ENCODE measurements at regions of chr18 and their contacts with region 1.

Region 1: GRCh38 chr18:623761-624620 is 27.2 kb downstream of the CLUL1 start:
- DNase-seq: peak; percentile 78
- ATAC-seq: peak; percentile 85
- H3K4me3 ChIP-seq: no peak overlapping the region
- H3K27ac ChIP-seq: no peak overlapping the region
- H3K4me1 ChIP-seq: no peaks in the 10 kb centered on the region; the same call in 1 of the 2 replicates
- H3K27me3 ChIP-seq: peaks cover 8% of the 10 kb centered on the region
- CTCF ChIP-seq: peak; percentile 73
- POLR2A ChIP-seq: no peak
- RAD21 ChIP-seq: peak; percentile 67

Region 2: GRCh38 chr18:148841-149240 is 475.1 kb before region 1 on chr18:
- CTCF ChIA-PET with region 1: no interaction called
- POLR2A ChIA-PET with region 1: no interaction called
- dilution Hi-C with region 1: no loop called
- in situ Hi-C with region 1: no loop called
- intact Hi-C with region 1: no loop called
- DNase-seq: no peak
- ATAC-seq: no peak
- H3K4me3 ChIP-seq: no peak overlapping the region
- H3K27ac ChIP-seq: no peak overlapping the region
- H3K4me1 ChIP-seq: no peaks in the 10 kb centered on the region
- H3K27me3 ChIP-seq: peaks cover 4% of the 10 kb centered on the region
- CTCF ChIP-seq: no peak
- POLR2A ChIP-seq: no peak
- RAD21 ChIP-seq: no peak

Region 3: GRCh38 chr18:286515-287310 is 337.3 kb before region 1 on chr18:
- CTCF ChIA-PET with region 1: interaction called, 4 read pairs
- POLR2A ChIA-PET with region 1: no interaction called
- dilution Hi-C with region 1: no loop called
- in situ Hi-C with region 1: loop called (anchors 5 kb)
- intact Hi-C with region 1: no loop called
- DNase-seq: peak; percentile 42
- ATAC-seq: peak; percentile 70
- H3K4me3 ChIP-seq: no peak overlapping the region
- H3K27ac ChIP-seq: no peak overlapping the region
- H3K4me1 ChIP-seq: no peaks in the 10 kb centered on the region
- H3K27me3 ChIP-seq: peaks cover 8% of the 10 kb centered on the region
- CTCF ChIP-seq: peak; percentile 85
- POLR2A ChIP-seq: peak; percentile 33; the same call in 1 of the 2 replicates
- RAD21 ChIP-seq: peak; percentile 91

Region 4: DNA sequence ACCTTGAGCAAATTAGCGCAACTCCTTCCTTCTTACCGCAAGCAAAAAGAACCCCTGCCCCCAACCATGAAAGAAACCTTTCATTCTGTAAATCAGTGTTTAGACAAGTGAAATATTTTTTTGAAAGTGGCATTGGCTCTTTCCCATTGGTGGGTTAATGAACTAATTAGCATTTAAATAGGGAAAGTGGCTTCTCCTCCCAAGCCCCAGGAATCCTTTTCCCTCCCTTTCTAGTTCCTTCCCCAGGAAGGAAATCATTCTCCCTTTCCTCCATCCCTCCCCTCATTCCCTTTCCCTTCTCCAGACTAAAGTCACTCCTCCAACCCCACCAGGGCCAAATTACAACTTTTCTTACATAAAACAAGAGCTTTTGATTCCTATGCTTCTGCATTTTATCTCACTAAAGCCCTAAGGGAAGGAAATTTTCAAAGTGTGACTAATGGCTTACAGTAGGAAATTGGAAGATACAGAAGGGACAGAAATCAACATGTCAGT is 10.6 kb after region 1 on chr18:
- CTCF ChIA-PET with region 1: interaction called, 4 read pairs
- POLR2A ChIA-PET with region 1: interaction called, 17 read pairs
- dilution Hi-C with region 1: no loop called
- in situ Hi-C with region 1: no loop called
- intact Hi-C with region 1: no loop called
- DNase-seq: no peak
- ATAC-seq: 0 out of 2 replicates have a peak, but pooled peaks have one; percentile 17
- H3K4me3 ChIP-seq: no peak overlapping the region
- H3K27ac ChIP-seq: no peak overlapping the region
- H3K4me1 ChIP-seq: no peaks in the 10 kb centered on the region
- H3K27me3 ChIP-seq: peaks cover 3% of the 10 kb centered on the region; the same call in 1 of the 2 replicates
- CTCF ChIP-seq: no peak
- POLR2A ChIP-seq: no peak
- RAD21 ChIP-seq: no peak

Region 5: DNA sequence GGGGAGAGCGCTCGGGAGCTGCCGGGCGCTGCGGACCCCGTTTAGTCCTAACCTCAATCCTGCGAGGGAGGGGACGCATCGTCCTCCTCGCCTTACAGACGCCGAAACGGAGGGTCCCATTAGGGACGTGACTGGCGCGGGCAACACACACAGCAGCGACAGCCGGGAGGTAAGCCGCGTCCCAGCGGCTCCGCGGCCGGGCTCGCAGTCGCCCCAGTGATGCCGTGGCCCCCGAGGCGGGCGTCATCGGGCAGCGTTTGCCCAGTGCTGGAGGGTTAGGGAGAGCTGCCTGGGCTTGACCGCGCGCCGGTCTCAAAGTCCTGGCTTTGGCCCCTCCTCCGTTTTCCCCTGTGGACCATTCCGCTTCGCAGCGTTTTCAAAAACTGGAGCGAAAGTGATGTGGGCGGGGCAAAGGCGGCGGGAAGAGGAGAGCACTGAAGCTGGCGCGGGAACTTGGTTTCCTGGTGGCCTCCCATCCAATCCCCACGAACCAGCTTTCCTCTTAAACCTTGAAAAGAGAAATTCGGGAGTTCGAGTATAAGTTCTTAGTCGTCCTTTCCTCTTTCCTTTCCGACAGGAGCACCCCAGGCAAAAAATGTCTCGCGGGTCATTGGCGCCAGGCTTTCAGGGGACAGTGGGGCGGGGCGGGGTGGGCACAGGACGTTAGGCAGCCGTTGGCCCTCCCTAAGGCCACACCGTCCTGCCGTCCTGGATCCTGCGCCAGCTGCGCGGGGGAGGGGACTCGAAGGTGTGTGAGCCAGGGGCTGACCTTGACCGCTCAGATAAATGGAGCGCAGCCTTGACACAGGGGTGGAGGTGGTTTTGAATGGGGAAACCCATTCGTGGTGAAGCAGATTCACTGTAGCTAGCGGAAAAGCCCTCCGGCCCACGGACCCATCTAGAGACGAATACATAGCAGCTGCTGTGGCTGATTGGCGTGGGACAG is 34.3 kb after region 1 on chr18:
- CTCF ChIA-PET with region 1: interaction called, 4 read pairs
- POLR2A ChIA-PET with region 1: no interaction called
- dilution Hi-C with region 1: no loop called
- in situ Hi-C with region 1: no loop called
- intact Hi-C with region 1: loop called (anchors 2 kb)
- DNase-seq: peak; percentile 84
- ATAC-seq: peak; percentile 94
- H3K4me3 ChIP-seq: peak overlapping the region; percentile 90
- H3K27ac ChIP-seq: peak overlapping the region; percentile 98
- H3K4me1 ChIP-seq: 0 out of 2 replicates have a peak, but pooled peaks cover 2% of the 10 kb centered on the region
- H3K27me3 ChIP-seq: no peaks in the 10 kb centered on the region
- CTCF ChIP-seq: no peak
- POLR2A ChIP-seq: no peak
- RAD21 ChIP-seq: no peak

Region 6: GRCh38 chr18:741931-742512 is 118.0 kb after region 1 on chr18:
- CTCF ChIA-PET with region 1: no interaction called
- POLR2A ChIA-PET with region 1: no interaction called
- dilution Hi-C with region 1: no loop called
- in situ Hi-C with region 1: no loop called
- intact Hi-C with region 1: loop called (anchors 5 kb)
- DNase-seq: peak; percentile 63
- ATAC-seq: peak; percentile 83
- H3K4me3 ChIP-seq: no peak overlapping the region
- H3K27ac ChIP-seq: no peak overlapping the region
- H3K4me1 ChIP-seq: no peaks in the 10 kb centered on the region
- H3K27me3 ChIP-seq: no peaks in the 10 kb centered on the region
- CTCF ChIP-seq: peak; percentile 77
- POLR2A ChIP-seq: no peak
- RAD21 ChIP-seq: peak; percentile 83

Region 7: DNA sequence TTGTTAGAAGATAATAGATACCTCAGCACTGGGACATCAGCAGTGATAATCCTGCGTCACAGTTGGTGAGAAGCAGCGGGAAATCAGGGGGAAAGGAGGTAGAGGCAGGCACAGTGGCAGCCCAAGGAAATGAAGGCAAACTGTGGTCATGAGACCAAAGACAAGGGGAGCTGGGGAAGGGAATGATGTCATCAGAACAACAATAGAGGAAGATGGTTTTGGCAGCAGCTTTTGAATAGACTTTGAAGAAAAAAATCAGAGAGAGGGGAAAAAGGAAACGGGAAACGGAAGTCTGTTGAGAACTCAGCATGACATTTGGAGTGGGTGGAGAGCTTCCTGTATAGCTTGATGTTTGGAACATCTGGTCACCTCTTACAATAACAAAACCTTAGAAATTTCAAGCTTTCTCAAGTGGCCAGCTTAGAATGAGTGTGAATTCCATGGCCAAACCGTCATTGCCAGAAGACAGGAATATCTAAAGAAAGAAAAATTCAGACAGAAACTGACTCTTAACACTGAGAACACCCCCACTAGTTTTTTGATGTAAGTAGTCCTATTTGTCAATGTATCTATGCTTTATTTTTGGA is 206.4 kb after region 1 on chr18:
- CTCF ChIA-PET with region 1: interaction called, 25 read pairs
- POLR2A ChIA-PET with region 1: no interaction called
- dilution Hi-C with region 1: no loop called
- in situ Hi-C with region 1: loop called (anchors 5 kb)
- intact Hi-C with region 1: loop called (anchors 1 kb)
- DNase-seq: peak; percentile 67
- ATAC-seq: peak; percentile 51
- H3K4me3 ChIP-seq: no peak overlapping the region
- H3K27ac ChIP-seq: no peak overlapping the region
- H3K4me1 ChIP-seq: peaks cover 5% of the 10 kb centered on the region
- H3K27me3 ChIP-seq: peaks cover 18% of the 10 kb centered on the region
- CTCF ChIP-seq: no peak
- POLR2A ChIP-seq: no peak
- RAD21 ChIP-seq: no peak